Common myeloid progenitor, CD34-positive (primary cell): ENCODE measurements at regions of chr11 and their contacts with region 1.

Region 1: GRCh38 chr11:65274735-65275682 is 13.2 kb downstream of the POLA2 start:
- DNase-seq: peak; percentile 68 to 86 (median 76)
- H3K4me3 ChIP-seq: no peak overlapping the region
- H3K27ac ChIP-seq: no peak overlapping the region
- H3K4me1 ChIP-seq: no peaks in the 10 kb centered on the region
- H3K27me3 ChIP-seq: no peaks in the 10 kb centered on the region

Region 2: DNA sequence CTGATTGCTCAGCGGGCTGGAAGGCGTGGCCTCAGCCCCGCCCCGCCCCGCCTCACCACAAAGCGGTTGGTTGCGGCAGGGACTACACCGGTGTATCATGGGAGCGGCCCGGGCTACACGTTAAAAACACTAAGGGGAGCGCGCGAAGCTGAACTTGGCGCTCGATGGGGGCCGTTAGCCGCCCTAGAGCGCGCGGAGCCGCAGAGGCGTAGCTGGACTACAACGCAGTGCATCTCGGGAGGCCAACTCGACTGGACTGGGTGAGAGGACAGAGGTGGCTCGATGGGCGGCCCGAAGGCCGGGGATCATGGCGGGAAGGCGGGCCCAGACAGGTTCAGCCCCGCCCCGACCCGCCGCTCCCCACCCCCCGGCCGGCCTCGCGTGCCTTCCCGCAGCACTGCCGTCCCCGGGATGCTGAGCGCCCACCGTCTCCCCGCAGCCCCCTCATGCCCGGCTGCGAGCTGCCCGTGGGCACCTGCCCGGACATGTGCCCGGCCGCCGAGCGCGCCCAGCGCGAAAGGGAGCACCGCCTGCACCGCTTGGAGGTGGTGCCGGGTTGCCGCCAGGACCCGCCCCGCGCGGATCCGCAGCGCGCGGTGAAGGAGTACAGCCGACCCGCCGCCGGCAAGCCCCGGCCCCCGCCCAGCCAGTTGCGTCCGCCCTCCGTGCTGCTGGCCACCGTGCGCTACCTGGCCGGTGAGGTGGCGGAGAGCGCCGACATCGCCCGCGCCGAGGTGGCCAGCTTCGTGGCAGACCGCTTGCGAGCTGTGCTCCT is 234.0 kb before region 1 on chr11 and contains the start of gene SAC3D1:
- CTCF ChIA-PET with region 1: no interaction called
- POLR2A ChIA-PET with region 1: no interaction called
- DNase-seq: peak; percentile 93 to 97 (median 96)
- H3K4me3 ChIP-seq: peak within 1 kb of the TSS; percentile 59 to 85 (median 76)
- H3K27ac ChIP-seq: peak within 1 kb of the TSS in 1 of 2 experiments; percentile 75
- H3K4me1 ChIP-seq: peaks cover 2 to 39% (median 27%) of the 10 kb centered on the region in 4 experiments
- H3K27me3 ChIP-seq: no peaks in the 10 kb centered on the region

Region 3: GRCh38 chr11:65187971-65188461 is 87.0 kb before region 1 on chr11:
- CTCF ChIA-PET with region 1: no interaction called
- POLR2A ChIA-PET with region 1: no interaction called
- DNase-seq: no peak
- H3K4me3 ChIP-seq: no peak overlapping the region
- H3K27ac ChIP-seq: no peak overlapping the region
- H3K4me1 ChIP-seq: peaks cover 0 to 5% (median 2%) of the 10 kb centered on the region in 4 experiments
- H3K27me3 ChIP-seq: no peaks in the 10 kb centered on the region

Region 4: DNA sequence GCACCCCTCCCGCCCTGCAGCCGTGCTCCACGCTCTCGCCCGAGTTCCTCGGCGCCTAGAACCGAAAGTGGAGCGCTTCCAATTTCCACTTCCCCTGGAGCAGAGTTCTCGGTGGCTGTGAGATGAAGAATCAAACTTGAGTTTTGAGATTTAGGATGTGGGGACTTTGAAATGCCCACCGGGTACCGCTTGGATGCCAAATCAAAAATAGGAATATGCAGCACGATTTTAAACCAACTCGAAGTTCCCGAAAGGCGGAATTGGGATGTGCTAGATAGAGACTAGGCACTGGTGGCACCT is 12.7 kb before region 1 on chr11:
- CTCF ChIA-PET with region 1: interaction called, 24 read pairs
- POLR2A ChIA-PET with region 1: no interaction called
- DNase-seq: peak in 1 of 3 donors; percentile 64
- H3K4me3 ChIP-seq: peak overlapping the region; percentile 59 to 92 (median 88)
- H3K27ac ChIP-seq: peak overlapping the region; percentile 64 to 87
- H3K4me1 ChIP-seq: peaks cover 15 to 35% (median 27%) of the 10 kb centered on the region in 4 experiments
- H3K27me3 ChIP-seq: no peaks in the 10 kb centered on the region

Region 5: GRCh38 chr11:65290448-65291165 is 15.6 kb after region 1 on chr11:
- CTCF ChIA-PET with region 1: interaction called, 13 read pairs
- POLR2A ChIA-PET with region 1: no interaction called
- DNase-seq: peak; percentile 65 to 83 (median 82)
- H3K4me3 ChIP-seq: peak overlapping the region in 1 of 7 experiments; percentile 26
- H3K27ac ChIP-seq: peak overlapping the region in 1 of 2 experiments; percentile 43
- H3K4me1 ChIP-seq: peaks cover 11 to 30% (median 21%) of the 10 kb centered on the region in 4 experiments
- H3K27me3 ChIP-seq: no peaks in the 10 kb centered on the region

Region 6: GRCh38 chr11:65427691-65428577 is 152.9 kb after region 1 on chr11:
- CTCF ChIA-PET with region 1: no interaction called
- POLR2A ChIA-PET with region 1: no interaction called
- DNase-seq: peak in 2 of 3 donors; percentile 67 to 73
- H3K4me3 ChIP-seq: peak overlapping the region in 6 of 7 experiments; percentile 31 to 100 (median 94)
- H3K27ac ChIP-seq: peak overlapping the region; percentile 99 to 100
- H3K4me1 ChIP-seq: peaks cover 36 to 80% (median 57%) of the 10 kb centered on the region in 4 experiments
- H3K27me3 ChIP-seq: no peaks in the 10 kb centered on the region